ENCODE measurements at regions of chr13 and their contacts with region 1.

Region 1: DNA sequence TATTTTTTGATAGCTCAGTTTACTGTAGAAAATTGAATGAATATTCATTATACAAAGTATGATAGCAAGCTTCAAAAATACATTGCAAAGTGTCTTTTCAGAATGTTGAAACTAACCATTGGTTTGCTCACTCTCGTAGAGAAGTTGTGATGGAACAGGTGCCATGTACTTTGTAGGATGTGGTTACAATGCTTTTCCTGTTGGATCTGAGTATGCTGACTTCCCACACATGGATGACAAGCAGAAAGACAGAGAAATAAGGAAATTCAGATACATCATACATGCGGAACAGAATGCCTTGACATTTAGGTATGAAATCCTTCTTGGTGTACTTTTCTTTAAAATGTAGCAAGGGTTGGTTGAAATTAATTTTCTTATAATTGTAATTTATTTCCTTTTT is 30.5 kb downstream of the CDADC1 start:
- DNase-seq: no peak
- H3K4me3 Mint-ChIP-seq: no peak overlapping the region
- H3K27ac Mint-ChIP-seq: no peak overlapping the region
- H3K4me1 Mint-ChIP-seq: peaks cover 4% of the 10 kb centered on the region
- H3K27me3 Mint-ChIP-seq: no peaks in the 10 kb centered on the region

Region 2: DNA sequence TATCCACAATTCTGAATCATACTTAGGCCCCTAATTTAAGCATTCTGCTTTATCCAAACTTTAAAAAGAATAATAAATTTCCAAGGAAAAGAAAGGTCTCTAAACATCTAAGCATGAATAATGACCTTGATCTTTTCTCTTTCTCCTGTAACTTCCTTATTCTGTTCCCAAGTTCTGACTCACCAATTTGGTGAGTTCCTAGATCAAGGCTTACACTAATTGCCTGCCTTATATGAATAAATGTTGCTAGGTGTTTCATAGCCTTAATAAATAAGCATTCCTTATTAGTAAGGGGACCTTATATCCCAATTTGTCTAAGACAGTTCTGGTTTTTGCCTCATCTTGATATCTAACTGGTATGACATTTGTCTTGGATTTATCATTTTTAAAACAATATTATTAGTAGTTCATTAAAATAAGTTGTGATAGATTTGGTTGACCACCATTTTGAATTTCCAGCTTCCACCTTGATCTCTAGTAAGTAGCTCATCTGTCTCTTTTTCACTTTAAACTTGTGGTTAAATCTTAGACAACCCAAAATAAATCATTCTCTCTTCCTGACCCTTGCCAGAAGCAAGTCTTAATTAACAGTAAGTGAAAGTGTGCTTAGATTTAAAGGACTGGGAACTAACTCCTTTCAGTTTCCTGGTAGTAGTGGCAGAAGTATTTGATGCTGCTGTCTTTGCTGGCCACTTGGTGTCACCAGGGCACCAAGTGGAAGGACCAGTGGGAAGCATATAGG is 179.3 kb before region 1 on chr13:
- CTCF ChIA-PET with region 1: interaction called, 3 read pairs
- POLR2A ChIA-PET with region 1: no interaction called
- intact Hi-C with region 1: loop called (anchors 10 kb)
- DNase-seq: no peak
- H3K4me3 Mint-ChIP-seq: no peak overlapping the region
- H3K27ac Mint-ChIP-seq: no peak overlapping the region
- H3K4me1 Mint-ChIP-seq: peaks cover 19% of the 10 kb centered on the region
- H3K27me3 Mint-ChIP-seq: no peaks in the 10 kb centered on the region

Region 3: GRCh38 chr13:49214917-49215376 is 63.3 kb before region 1 on chr13:
- CTCF ChIA-PET with region 1: interaction called, 14 read pairs
- POLR2A ChIA-PET with region 1: no interaction called
- intact Hi-C with region 1: loop called (anchors 2 kb)
- DNase-seq: peak; percentile 59
- H3K4me3 Mint-ChIP-seq: no peak overlapping the region
- H3K27ac Mint-ChIP-seq: no peak overlapping the region
- H3K4me1 Mint-ChIP-seq: peaks cover 14% of the 10 kb centered on the region
- H3K27me3 Mint-ChIP-seq: peaks cover 26% of the 10 kb centered on the region

Region 4: DNA sequence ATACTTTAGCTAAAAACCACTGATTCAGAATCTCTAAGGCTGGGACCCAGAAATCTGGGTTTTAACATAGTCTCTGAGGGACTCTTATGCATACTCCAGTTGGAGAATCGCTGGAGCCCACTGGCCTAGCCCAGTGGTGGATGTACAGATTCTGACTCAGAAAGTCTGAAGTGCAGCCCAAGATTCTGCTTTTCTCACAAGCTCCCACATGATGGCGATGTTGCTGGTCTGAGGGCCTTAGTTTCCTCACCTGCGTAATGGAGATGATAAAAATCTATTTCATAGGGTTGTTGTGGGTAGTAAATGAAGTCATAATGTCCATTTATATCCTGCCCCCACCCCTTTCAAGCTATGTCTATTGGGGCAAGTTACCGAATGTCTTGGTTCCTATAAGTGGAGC is 38.2 kb before region 1 on chr13:
- CTCF ChIA-PET with region 1: interaction called, 58 read pairs
- POLR2A ChIA-PET with region 1: no interaction called
- intact Hi-C with region 1: loop called (anchors 1 kb)
- DNase-seq: peak; percentile 60
- H3K4me3 Mint-ChIP-seq: no peak overlapping the region
- H3K27ac Mint-ChIP-seq: no peak overlapping the region
- H3K4me1 Mint-ChIP-seq: no peaks in the 10 kb centered on the region
- H3K27me3 Mint-ChIP-seq: peaks cover 2% of the 10 kb centered on the region

Region 5: DNA sequence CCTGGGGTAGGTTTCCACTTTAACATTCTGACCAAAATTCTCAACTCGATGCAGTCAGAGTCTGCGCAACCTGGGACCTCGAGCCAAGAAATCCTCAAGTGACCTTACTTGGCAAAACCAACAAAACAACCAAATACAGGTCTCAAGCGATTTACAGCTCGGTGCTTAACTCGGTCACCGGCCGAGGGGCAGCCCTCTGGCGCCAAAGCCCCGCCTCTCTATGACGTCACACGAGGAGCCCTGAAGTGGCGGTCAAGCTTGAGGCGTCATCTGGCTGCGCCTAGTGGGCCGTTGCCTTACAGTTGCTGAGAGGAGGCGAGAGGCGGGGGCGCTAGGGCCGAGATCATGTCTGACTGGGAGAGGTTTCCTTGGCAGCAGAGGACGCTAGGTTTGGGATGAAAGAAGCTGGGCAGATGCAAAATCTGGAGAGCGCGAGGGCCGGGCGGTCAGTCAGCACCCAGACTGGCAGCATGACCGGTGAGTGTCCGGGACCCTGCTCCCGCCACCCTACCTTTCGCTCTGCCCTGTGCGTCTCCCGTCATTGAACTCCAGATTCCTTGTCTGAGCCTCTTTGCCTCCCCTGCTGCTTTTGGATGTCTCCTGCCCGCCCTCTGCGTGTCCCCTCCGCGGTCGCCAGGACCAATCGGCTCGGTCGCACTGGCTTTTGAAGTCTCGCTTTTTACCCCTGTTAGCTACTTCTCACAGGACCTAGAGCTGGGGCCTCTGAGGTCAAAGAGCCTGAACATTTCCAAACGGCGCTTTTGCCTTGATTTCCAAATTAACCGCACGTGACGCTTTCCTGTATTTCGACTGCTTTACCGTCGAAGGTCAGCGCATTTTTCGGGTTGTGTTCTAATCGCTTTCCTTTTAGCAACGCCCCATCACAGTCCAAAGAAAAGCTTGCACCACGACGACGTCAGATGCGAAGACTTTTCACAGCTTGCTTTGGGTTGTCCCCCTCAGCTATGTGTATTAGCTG is 30.3 kb before region 1 on chr13 and contains the start of gene CDADC1:
- CTCF ChIA-PET with region 1: interaction called, 33 read pairs
- POLR2A ChIA-PET with region 1: no interaction called
- intact Hi-C with region 1: no loop called
- DNase-seq: peak; percentile 97
- H3K4me3 Mint-ChIP-seq: peak within 1 kb of the TSS; percentile 90
- H3K27ac Mint-ChIP-seq: peak within 1 kb of the TSS; percentile 88
- H3K4me1 Mint-ChIP-seq: peaks cover 34% of the 10 kb centered on the region
- H3K27me3 Mint-ChIP-seq: no peaks in the 10 kb centered on the region
- total RNA-seq, gene CDADC1: 9.0 to 11.1 TPM

Measured in activated CD4-positive, alpha-beta memory T cell treated with anti-CD3 and anti-CD28 coated beads for 36 hours (primary cell).